H1 (cell line): ENCODE measurements at regions of chr7 and their contacts with region 1.

Region 1: DNA sequence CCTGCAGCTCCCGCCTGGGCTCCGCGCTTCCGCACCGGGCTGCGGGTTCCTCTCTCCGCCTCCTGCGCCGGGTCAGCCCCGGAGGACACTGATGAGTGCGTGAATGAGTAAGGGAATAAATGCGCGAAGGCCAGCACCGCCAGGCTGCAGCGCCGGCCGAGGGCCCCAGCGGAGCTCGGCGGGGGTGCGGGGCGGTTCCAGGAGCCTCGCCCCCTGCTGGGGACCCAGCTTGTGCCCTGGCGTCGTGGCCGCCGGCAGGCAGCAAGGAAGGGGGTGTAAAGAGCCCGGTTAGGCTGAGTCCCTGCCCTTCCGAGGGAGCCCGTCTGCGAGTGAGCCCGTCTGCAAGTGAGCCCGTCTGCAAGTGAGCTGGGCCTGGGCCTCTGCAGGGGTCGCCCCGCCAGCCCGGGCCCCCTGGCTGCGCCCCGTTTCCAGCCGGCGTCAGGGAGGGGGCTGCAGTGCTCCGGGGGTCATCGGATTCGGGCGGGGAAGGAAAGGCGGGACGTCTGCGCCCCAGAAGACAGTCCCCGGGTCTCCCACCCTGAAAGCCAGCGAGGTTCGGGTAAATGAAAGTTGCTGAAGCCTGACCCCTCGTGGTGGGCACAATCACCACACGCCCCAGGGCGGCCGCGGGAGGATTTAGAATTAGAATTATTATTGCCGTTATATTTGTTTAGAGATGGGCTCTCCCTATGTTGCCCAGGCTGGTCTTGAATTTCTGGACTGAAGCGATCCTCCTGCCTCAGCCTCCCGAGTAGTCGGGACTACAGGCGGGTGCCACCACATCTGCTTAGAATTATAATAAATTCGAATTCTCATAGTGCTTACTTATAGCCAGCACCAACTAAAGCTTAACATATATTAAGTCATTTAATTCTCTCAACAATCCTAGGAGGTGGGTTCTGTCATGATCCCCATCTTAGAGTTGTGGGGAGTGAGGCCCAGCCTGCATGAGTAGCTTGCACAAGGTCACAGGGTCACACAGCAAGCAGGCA is 8.6 kb upstream of the CRYGN start:
- DNase-seq: peak in 1 of 2 experiments; percentile 90
- H3K4me3 ChIP-seq: peak overlapping the region; percentile 20 to 62 (median 44)
- H3K27ac ChIP-seq: no peak overlapping the region
- H3K4me1 ChIP-seq: peaks cover 0 to 16% (median 7%) of the 10 kb centered on the region in 4 experiments; a peak in 5 of 7 replicates
- H3K27me3 ChIP-seq: peaks cover 0 to 12% (median 7%) of the 10 kb centered on the region in 4 experiments; a peak in 5 of 7 replicates
- CTCF ChIP-seq: peak; percentile 80 to 85 (median 83)
- EP300 ChIP-seq: no peak
- POLR2A ChIP-seq: no peak
- RAD21 ChIP-seq: peak; percentile 81 to 82

Region 2: GRCh38 chr7:151351027-151351426 is 97.5 kb before region 1 on chr7:
- CTCF ChIA-PET with region 1: interaction called, 18 read pairs
- POLR2A ChIA-PET with region 1: no interaction called
- DNase-seq: peak in 1 of 2 experiments; percentile 77
- H3K4me3 ChIP-seq: no peak overlapping the region
- H3K27ac ChIP-seq: no peak overlapping the region
- H3K4me1 ChIP-seq: no peaks in the 10 kb centered on the region
- H3K27me3 ChIP-seq: no peaks in the 10 kb centered on the region
- CTCF ChIP-seq: peak; percentile 76 to 95 (median 79)
- EP300 ChIP-seq: no peak
- POLR2A ChIP-seq: no peak
- RAD21 ChIP-seq: peak; percentile 54 to 61

Region 3: GRCh38 chr7:151368136-151368571 is 80.4 kb before region 1 on chr7:
- CTCF ChIA-PET with region 1: interaction called, 185 read pairs
- POLR2A ChIA-PET with region 1: interaction called, 4 read pairs
- DNase-seq: peak; percentile 58 to 91
- H3K4me3 ChIP-seq: no peak overlapping the region
- H3K27ac ChIP-seq: no peak overlapping the region
- H3K4me1 ChIP-seq: peaks cover 0 to 7% (median 2%) of the 10 kb centered on the region in 4 experiments; a peak in 3 of 7 replicates
- H3K27me3 ChIP-seq: no peaks in the 10 kb centered on the region; a peak in 1 of 7 replicates
- CTCF ChIP-seq: peak; percentile 95 to 100 (median 95)
- EP300 ChIP-seq: no peak
- POLR2A ChIP-seq: no peak
- RAD21 ChIP-seq: peak; percentile 86 to 90

Region 4: GRCh38 chr7:151400626-151401315 is 47.8 kb before region 1 on chr7:
- CTCF ChIA-PET with region 1: interaction called, 32 read pairs
- POLR2A ChIA-PET with region 1: no interaction called
- DNase-seq: no peak
- H3K4me3 ChIP-seq: no peak overlapping the region
- H3K27ac ChIP-seq: no peak overlapping the region
- H3K4me1 ChIP-seq: peaks cover 0 to 14% (median 9%) of the 10 kb centered on the region in 4 experiments; a peak in 6 of 7 replicates
- H3K27me3 ChIP-seq: no peaks in the 10 kb centered on the region
- CTCF ChIP-seq: peak in 1 of 3 experiments; percentile 10; a peak in 1 of 4 replicates
- EP300 ChIP-seq: 0 out of 3 replicates have a peak, but pooled peaks of 1 of the 2 experiments have one; percentile 11
- POLR2A ChIP-seq: no peak
- RAD21 ChIP-seq: no peak

Region 5: DNA sequence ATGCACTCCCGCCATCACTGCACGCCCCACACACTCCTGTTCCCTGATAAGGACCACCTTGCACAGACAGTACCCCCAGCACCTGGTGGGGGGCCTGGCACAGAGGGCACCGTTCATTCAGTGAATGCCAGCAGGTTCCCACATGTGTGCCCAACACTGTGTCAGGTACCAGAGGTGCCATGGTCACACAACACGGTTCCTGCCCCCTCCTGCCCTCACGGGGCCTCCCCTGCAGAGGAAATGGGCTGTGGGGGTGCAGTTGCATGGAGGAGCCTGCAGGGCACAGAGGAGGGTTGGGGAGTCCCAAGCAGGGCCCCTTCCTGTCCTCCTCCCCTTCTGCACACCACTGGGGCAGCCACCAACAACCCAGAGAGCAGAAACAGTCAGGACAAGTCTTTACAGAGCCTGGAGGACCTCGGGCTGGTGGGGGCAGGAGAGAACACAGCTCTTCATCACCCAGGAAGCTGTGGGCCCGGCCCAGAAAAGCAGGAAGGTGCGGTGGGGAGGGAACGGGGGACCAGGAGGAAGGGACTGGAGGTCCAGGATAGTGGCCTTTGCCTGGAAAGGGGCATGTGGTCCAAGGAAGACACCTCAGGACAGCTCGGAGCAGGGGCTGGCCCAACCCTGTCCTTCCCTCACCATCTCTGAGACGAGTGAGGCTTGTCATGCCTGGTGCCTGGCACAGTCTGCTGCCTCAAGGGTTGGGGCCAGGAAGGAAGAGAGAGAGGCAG is 15.6 kb before region 1 on chr7:
- CTCF ChIA-PET with region 1: interaction called, 24 read pairs
- POLR2A ChIA-PET with region 1: interaction called, 3 read pairs
- DNase-seq: peak in 1 of 2 experiments; percentile 49
- H3K4me3 ChIP-seq: no peak overlapping the region
- H3K27ac ChIP-seq: no peak overlapping the region
- H3K4me1 ChIP-seq: peaks cover 5 to 20% (median 10%) of the 10 kb centered on the region in 4 experiments
- H3K27me3 ChIP-seq: no peaks in the 10 kb centered on the region
- CTCF ChIP-seq: peak in 2 of 3 experiments; percentile 13 to 35; a peak in 1 of 4 replicates
- EP300 ChIP-seq: no peak
- POLR2A ChIP-seq: no peak
- RAD21 ChIP-seq: no peak; a peak in 1 of 4 replicates

Region 6: DNA sequence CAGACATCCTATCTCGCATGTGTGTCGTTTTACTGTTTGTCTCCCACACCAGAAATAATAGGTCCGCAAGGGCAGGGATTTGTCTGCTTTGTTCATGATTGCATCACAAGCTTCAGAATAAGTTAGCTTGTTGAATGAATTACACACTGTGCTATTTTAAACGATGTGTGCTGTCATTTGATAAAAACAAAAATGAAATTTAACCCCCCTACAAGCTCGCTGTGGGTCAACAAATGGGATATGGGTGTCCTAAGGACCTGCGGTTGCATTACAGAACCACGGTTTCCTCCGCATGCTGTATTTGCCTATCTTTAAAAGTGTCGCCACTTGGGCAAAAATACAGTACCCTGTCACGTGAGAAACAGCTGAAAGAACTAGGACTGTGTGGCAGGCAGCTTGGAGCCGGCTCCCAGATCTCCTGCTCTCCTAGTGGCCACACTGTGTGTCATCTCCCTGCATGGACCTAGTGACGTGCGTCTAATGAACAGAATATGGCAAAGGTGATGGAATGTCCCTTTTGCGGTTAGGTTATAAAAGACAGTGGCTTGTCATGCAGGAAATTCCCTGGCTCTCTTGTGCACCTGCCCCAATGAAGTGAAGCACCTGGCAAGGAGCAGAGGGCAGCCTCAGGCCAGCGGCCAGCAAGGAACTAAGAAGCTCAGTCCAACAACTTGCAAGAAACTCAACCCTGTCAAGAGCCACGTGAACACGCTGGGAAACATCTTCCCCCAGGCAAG is 24.3 kb after region 1 on chr7:
- CTCF ChIA-PET with region 1: interaction called, 10 read pairs
- POLR2A ChIA-PET with region 1: interaction called, 4 read pairs
- DNase-seq: no peak
- H3K4me3 ChIP-seq: peak overlapping the region in 1 of 4 experiments; percentile 22; a peak in 1 of 8 replicates
- H3K27ac ChIP-seq: peak overlapping the region; percentile 19; the same call in 1 of the 2 replicates
- H3K4me1 ChIP-seq: peaks cover 15 to 32% (median 28%) of the 10 kb centered on the region in 4 experiments
- H3K27me3 ChIP-seq: no peaks in the 10 kb centered on the region
- CTCF ChIP-seq: no peak
- EP300 ChIP-seq: no peak
- POLR2A ChIP-seq: no peak
- RAD21 ChIP-seq: no peak; a peak in 1 of 4 replicates